OCI-LY7 (cell line): ENCODE measurements at regions of chr6 and their contacts with region 1.

Region 1: DNA sequence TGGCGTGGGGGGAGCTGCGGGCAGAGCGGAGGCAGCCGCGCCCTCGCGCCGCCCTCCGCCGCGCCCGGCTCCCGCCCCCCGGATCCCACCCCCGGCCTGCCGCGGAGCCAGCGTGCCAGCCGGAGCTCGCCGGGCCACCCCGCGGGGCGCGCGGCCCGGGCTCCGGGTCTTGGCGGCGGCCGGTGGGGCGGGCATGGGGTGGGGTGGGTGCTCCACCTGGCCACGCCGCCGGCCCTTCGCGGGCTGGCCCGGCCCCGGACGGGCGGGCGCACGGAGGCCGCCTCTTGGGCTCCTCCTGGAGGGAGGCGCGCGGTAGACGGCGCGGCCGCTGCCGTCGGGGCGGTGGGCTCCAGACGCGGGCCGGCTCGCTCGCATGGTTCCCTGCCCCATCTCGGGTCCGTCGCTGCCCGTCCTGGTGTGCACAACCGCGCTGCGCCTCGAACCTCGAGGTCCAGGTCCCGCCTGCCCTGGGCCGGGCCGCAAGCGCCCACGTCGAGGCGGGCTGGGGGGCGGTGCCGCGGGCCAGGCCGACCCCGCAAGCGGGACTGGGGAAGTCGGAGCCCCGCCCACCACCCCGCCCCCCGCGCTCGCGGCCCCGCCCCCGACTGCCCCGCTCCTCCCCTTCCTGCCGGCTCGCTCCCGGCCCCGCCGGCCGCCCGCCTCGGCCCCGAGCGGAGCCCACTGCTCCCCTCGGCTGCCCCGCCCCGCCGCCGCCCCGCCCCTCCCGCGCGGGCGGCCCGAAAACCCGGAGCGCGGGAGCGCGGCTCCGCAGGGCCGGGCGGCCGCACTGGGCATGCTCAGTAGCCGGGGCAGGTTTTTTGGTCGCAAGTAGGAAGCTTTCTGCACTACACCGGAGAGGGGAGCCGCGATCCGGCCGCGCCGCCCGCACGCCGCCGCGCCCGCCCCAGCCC is at the start of gene CDYL:
- DNase-seq: peak; percentile 92
- H3K4me3 ChIP-seq: peak within 1 kb of the TSS; percentile 74
- H3K27ac ChIP-seq: peak within 1 kb of the TSS; percentile 37
- H3K4me1 ChIP-seq: peaks cover 26% of the 10 kb centered on the region
- CTCF ChIP-seq: no peak
- total RNA-seq, gene CDYL: 33.6 and 51.4 TPM in 2 replicates

Region 2: GRCh38 chr6:3176562-3177355 is 1599.1 kb before region 1 on chr6:
- CTCF ChIA-PET with region 1: no interaction called
- POLR2A ChIA-PET with region 1: no interaction called
- intact Hi-C with region 1: no loop called
- DNase-seq: no peak
- H3K4me3 ChIP-seq: no peak overlapping the region
- H3K27ac ChIP-seq: no peak overlapping the region
- H3K4me1 ChIP-seq: peaks cover 7% of the 10 kb centered on the region
- CTCF ChIP-seq: no peak

Region 3: GRCh38 chr6:4018172-4018905 is 757.5 kb before region 1 on chr6:
- CTCF ChIA-PET with region 1: interaction called, 5 read pairs
- POLR2A ChIA-PET with region 1: no interaction called
- intact Hi-C with region 1: loop called (anchors 10 kb)
- DNase-seq: peak; percentile 97
- H3K4me3 ChIP-seq: peak overlapping the region; percentile 89
- H3K27ac ChIP-seq: peak overlapping the region; percentile 94
- H3K4me1 ChIP-seq: peaks cover 38% of the 10 kb centered on the region
- CTCF ChIP-seq: peak; percentile 68

Region 4: DNA sequence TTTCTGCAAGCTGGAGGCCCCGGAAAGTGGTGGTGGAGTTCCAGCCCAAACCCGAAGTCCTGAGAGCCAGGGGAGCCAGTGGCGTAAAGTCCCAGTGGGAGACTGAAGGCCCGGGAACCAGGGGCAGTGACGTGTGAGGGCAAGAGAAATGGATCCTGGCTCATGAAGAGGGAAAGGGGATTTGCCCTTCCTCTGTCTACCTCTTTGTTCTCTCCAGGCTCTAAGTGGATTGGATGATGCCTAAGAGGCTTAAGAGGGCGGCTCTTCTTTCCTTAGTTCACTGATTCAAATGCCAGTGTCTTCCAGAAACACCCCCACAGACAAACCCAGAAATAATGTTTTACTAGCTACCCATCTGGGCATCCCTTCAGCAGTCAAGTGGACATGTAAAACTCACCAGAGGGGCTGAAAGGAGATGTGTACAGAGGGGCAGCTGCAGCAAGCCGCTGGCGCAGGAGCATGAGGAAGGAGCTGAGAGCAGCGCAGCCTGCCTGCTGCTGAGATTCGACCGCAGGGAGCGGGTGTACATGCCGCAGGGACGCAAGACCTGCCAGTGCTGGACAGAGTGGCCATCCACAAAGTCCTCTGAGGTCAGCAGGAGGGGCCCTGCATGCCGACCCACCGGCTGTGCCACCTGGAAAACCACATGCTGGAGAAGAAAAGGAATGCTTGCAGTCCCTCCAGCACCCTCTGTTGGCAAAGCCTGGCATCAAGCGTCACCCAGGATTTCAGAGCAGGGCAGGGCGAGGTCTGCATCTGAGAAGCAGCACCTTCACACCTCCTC is 29.9 kb after region 1 on chr6:
- CTCF ChIA-PET with region 1: no interaction called
- POLR2A ChIA-PET with region 1: interaction called, 11 read pairs
- intact Hi-C with region 1: no loop called
- DNase-seq: peak; percentile 22
- H3K4me3 ChIP-seq: no peak overlapping the region
- H3K27ac ChIP-seq: no peak overlapping the region
- H3K4me1 ChIP-seq: peaks cover 31% of the 10 kb centered on the region
- CTCF ChIP-seq: peak; percentile 75

Region 5: GRCh38 chr6:4879724-4880371 is 104.0 kb after region 1 on chr6:
- CTCF ChIA-PET with region 1: no interaction called
- POLR2A ChIA-PET with region 1: no interaction called
- intact Hi-C with region 1: loop called (anchors 2 kb)
- DNase-seq: peak; percentile 67
- H3K4me3 ChIP-seq: peak overlapping the region; percentile 60
- H3K27ac ChIP-seq: peak overlapping the region; percentile 76
- H3K4me1 ChIP-seq: peaks cover 75% of the 10 kb centered on the region
- CTCF ChIP-seq: no peak

Region 6: DNA sequence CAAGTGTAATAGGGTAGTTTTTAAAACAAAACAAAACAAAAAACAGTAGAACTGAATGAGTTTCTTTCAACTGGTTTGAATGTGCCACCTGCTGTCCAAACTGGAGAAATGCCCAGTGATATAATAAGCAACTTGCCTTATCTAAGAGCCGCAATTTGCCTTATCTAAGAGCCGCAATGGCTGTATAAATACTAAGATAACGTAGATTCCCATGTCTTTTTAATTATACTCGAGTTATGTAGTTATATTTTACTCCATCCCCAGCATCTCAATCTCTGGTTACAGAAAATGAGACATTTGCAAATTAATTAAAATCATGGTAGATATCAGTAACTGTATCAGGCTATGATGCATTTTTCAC is 160.8 kb after region 1 on chr6:
- CTCF ChIA-PET with region 1: no interaction called
- POLR2A ChIA-PET with region 1: no interaction called
- intact Hi-C with region 1: loop called (anchors 5 kb)
- DNase-seq: peak; percentile 71
- H3K4me3 ChIP-seq: no peak overlapping the region
- H3K27ac ChIP-seq: no peak overlapping the region
- H3K4me1 ChIP-seq: peaks cover 6% of the 10 kb centered on the region
- CTCF ChIP-seq: peak; percentile 91

Region 7: GRCh38 chr6:5003604-5004372 is 227.9 kb after region 1 on chr6 and contains the start of gene RPP40:
- CTCF ChIA-PET with region 1: no interaction called
- POLR2A ChIA-PET with region 1: no interaction called
- intact Hi-C with region 1: loop called (anchors 5 kb)
- DNase-seq: peak; percentile 97
- H3K4me3 ChIP-seq: peak within 1 kb of the TSS; percentile 79
- H3K27ac ChIP-seq: peak within 1 kb of the TSS; percentile 61
- H3K4me1 ChIP-seq: peaks cover 11% of the 10 kb centered on the region
- CTCF ChIP-seq: peak; percentile 83
- total RNA-seq, gene RPP40: 8.0 and 22.7 TPM in 2 replicates